Naive thymus-derived CD8-positive, alpha-beta T cell (primary cell): ENCODE measurements at regions of chr18 and their contacts with region 1.

Region 1: GRCh38 chr18:74081966-74082741 is 65.5 kb downstream of the FBXO15 start:
- DNase-seq: peak; percentile 48 to 89 (median 66)
- ATAC-seq: peak; percentile 98 to 99
- H3K4me3 Mint-ChIP-seq: peak overlapping the region; percentile 72 to 94 (median 86)
- H3K27ac Mint-ChIP-seq: peak overlapping the region; percentile 93 to 99 (median 98)
- H3K4me1 Mint-ChIP-seq: peaks cover 12 to 24% (median 20%) of the 10 kb centered on the region in 4 donors
- H3K27me3 Mint-ChIP-seq: peaks cover 0 to 7% (median 0%) of the 10 kb centered on the region in 5 donors

Region 2: DNA sequence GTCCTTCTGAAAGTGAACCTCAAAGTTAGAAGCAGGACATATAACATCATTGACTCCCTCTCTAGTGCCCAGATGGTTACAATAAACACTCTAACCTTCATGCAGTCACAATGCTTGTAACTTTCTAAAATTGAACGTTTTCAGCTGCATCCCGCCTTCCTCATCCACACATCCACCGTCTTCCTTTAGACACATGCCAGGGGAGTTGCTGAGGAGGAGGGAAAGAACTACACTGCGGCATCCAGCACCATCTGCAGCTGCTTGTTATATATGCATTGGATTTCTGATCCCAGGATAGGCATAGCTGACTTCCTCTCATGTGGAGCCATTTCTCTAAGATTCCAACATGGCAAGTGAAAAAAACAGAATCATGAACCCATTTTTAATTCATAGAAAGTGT is 31.3 kb before region 1 on chr18:
- POLR2A ChIA-PET with region 1: no interaction called
- DNase-seq: no peak
- ATAC-seq: no peak
- H3K4me3 Mint-ChIP-seq: no peak overlapping the region
- H3K27ac Mint-ChIP-seq: no peak overlapping the region
- H3K4me1 Mint-ChIP-seq: no peaks in the 10 kb centered on the region
- H3K27me3 Mint-ChIP-seq: peaks cover 0 to 14% (median 3%) of the 10 kb centered on the region in 5 donors

Region 3: DNA sequence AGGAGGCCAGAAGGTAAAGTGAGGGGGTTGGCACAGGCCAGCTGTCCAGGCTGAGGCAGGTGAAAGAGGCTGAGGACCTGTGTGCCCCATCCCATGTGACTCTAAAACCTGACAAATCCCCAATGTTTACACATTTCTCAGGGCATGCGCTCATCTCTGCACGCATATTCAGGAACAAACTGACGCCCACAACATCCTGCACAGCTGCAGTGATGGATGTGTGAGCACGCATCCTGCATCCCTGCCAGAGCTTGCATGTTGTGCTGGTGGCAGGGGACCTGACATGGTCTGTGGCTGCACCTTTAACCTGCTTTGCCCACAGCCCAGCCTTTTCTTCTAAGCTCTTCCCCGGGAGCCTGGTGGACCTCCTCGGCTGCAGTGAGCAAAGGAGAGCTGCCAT is 17.6 kb before region 1 on chr18:
- POLR2A ChIA-PET with region 1: interaction called, 21 read pairs
- DNase-seq: peak in 4 of 10 donors; percentile 12 to 16 (median 14)
- ATAC-seq: peak; percentile 47 to 76
- H3K4me3 Mint-ChIP-seq: peak overlapping the region in 7 of 10 donors; percentile 15 to 48 (median 30)
- H3K27ac Mint-ChIP-seq: peak overlapping the region in 6 of 10 donors; percentile 1 to 78 (median 50)
- H3K4me1 Mint-ChIP-seq: peaks cover 7 to 43% (median 29%) of the 10 kb centered on the region in 4 donors
- H3K27me3 Mint-ChIP-seq: peaks cover 0 to 3% (median 0%) of the 10 kb centered on the region in 5 donors

Region 4: GRCh38 chr18:74147779-74148542 is 65.8 kb after region 1 on chr18 and contains the starts of genes FBXO15 and TIMM21:
- POLR2A ChIA-PET with region 1: interaction called, 12 read pairs
- DNase-seq: peak; percentile 94 to 98 (median 96)
- ATAC-seq: peak; percentile 83 to 85
- H3K4me3 Mint-ChIP-seq: peak within 1 kb of the TSS; percentile 91 to 100 (median 96)
- H3K27ac Mint-ChIP-seq: peak within 1 kb of the TSS; percentile 95 to 100 (median 99)
- H3K4me1 Mint-ChIP-seq: peaks cover 21 to 61% (median 51%) of the 10 kb centered on the region in 4 donors
- H3K27me3 Mint-ChIP-seq: peaks cover 0 to 2% (median 0%) of the 10 kb centered on the region in 5 donors
- polyA plus RNA-seq, gene FBXO15: 1.3 to 3.1 (median 2.0) TPM
- polyA plus RNA-seq, gene TIMM21: 14.6 to 17.4 (median 15.9) TPM

Region 5: GRCh38 chr18:74217476-74218143 is 135.5 kb after region 1 on chr18:
- POLR2A ChIA-PET with region 1: no interaction called
- DNase-seq: no peak
- ATAC-seq: no peak
- H3K4me3 Mint-ChIP-seq: no peak overlapping the region
- H3K27ac Mint-ChIP-seq: no peak overlapping the region
- H3K4me1 Mint-ChIP-seq: no peaks in the 10 kb centered on the region
- H3K27me3 Mint-ChIP-seq: peaks cover 9 to 35% (median 14%) of the 10 kb centered on the region in 5 donors